Aorta (tissue), 5 donors: ENCODE measurements at regions of chr9 and their contacts with region 1.

Region 1: DNA sequence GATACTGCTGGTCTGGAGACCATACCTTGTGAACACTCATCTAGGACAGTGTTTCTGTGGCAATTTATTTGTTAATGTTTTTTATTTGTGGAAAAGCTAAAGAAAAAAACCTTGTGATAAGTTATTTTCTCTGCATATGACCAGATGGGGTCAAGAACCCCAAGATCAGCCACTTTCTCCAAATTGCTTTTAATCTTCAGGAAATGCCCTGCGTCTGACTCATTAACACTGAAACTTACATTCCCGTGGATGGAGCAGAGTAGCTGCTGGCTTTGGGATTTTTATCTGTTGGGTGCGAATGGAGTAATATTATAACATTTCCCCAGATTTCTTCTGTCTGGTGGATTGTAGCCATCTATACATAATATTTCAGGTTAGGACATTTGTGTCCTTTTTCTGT is 444.5 kb downstream of the SH3GL2 start:
- DNase-seq: no peak
- ATAC-seq: no peak
- H3K4me3 ChIP-seq: no peak overlapping the region
- H3K27ac ChIP-seq: peak overlapping the region; percentile 27 to 43
- H3K4me1 ChIP-seq: peaks cover 4 to 5% of the 10 kb centered on the region in 2 donors
- H3K27me3 ChIP-seq: no peaks in the 10 kb centered on the region

Region 2: DNA sequence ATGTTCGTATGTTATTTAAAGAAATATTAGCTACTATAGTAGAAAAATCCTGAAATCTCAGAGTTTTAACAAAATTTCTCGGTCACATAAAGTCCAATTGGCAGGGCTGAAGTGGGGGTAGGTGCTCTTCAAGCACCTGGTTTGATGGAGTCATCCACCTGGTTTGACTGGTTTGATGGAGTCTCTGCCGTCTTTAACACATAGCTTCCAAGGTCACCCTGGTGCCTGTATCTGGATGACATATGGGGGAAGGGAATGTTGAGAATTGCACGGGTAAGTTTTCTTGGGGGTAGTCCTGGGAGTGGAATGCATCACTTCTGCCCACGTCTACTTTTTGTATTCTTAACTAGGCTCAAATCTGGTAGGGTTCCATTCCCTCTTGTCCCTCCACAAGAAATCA is 93.3 kb before region 1 on chr9:
- intact Hi-C with region 1: no loop called
- DNase-seq: no peak
- ATAC-seq: no peak
- H3K4me3 ChIP-seq: no peak overlapping the region
- H3K27ac ChIP-seq: no peak overlapping the region
- H3K4me1 ChIP-seq: no peaks in the 10 kb centered on the region
- H3K27me3 ChIP-seq: no peaks in the 10 kb centered on the region

Region 3: DNA sequence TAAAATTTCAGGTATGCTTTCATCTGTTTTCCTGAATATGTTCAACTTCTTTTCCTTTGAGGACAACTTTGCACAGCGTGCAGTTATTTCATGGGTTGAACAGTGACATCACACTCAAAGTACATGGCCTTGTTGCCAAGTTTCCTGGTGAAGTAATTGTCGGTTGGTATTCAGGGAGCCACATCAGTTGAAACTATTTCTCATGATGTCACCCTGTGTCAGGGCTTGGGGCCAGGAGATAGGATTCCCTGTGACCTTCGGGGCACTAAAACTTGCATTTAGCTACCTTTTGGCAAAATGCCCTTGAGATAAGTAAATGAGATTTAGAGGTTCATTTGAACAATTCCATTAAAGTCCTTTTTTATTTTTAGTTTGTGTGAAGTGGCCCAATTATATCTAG is 60.6 kb before region 1 on chr9:
- intact Hi-C with region 1: loop called in 1 of 2 experiments (anchors 2 kb)
- DNase-seq: peak; percentile 37 to 42
- ATAC-seq: peak; percentile 50
- H3K4me3 ChIP-seq: no peak overlapping the region
- H3K27ac ChIP-seq: no peak overlapping the region
- H3K4me1 ChIP-seq: peaks cover 0 to 1% of the 10 kb centered on the region in 2 donors
- H3K27me3 ChIP-seq: no peaks in the 10 kb centered on the region

Region 4: DNA sequence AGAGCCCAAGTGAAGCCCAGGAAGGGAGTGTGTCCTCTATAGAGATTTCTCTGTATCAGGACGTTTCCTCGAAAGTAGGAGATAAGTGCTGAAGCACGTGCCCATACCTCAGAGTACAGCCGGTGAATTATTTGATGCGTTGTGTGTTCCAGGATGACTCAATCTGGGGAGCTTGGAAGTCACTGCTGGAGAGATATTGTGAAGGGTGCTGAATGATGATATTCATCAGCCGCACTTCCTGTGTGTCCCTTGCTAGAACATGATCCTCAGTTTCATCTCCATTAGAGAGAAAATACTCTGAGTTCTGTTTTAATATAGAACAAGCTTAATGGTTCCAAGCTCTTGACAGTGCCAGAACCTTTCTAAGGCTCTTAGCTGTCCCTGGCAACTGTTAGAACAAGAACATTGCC is 48.3 kb after region 1 on chr9:
- intact Hi-C with region 1: loop called in 1 of 2 experiments (anchors 10 kb)
- DNase-seq: no peak
- ATAC-seq: peak; percentile 49
- H3K4me3 ChIP-seq: no peak overlapping the region
- H3K27ac ChIP-seq: no peak overlapping the region
- H3K4me1 ChIP-seq: peaks cover 0 to 4% of the 10 kb centered on the region in 2 donors
- H3K27me3 ChIP-seq: no peaks in the 10 kb centered on the region